ENCODE measurements at regions of chr5 and their contacts with region 1.

Region 1: GRCh38 chr5:67003935-67004729 is 192.5 kb downstream of the CD180 start:
- DNase-seq: peak; percentile 96
- H3K4me3 Mint-ChIP-seq: peak overlapping the region; percentile 94
- H3K27ac Mint-ChIP-seq: peak overlapping the region; percentile 97
- H3K4me1 Mint-ChIP-seq: peaks cover 58% of the 10 kb centered on the region
- H3K27me3 Mint-ChIP-seq: no peaks in the 10 kb centered on the region

Region 2: DNA sequence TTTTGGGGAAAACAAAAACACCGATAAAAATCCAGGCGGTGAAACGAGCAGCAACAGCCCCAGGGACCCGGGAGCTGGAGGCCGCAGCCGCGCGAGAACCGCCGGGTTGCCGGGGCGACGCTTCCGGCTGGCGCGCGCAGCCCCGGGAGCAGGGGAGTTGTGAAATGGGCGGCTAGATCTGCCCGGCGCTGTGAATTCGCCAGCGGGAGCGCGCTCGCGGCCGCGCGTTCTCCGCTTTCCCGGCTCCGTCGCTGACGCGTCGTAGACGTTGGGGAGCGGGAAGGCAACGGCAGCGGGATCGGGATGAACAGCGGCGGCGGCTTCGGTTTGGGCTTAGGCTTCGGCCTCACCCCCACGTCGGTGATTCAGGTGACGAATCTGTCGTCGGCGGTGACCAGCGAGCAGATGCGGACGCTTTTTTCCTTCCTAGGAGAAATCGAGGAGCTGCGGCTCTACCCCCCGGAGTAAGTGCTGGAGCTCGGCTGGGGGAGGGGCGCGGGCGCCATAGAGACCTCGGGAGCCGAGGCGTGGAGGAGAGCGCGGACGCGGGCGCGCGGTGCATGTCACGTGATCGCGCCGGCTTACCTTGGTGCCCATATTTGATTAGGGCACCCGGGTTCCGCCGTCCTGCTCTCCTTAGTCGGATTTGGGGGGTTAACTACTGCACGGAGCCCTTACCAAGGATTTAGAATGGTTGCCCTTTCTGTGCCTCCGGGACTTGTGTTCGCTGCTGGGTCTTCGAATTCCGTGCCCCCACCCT is 859.9 kb before region 1 on chr5 and contains the start of gene SREK1:
- CTCF ChIA-PET with region 1: no interaction called
- intact Hi-C with region 1: loop called (anchors 10 kb)
- DNase-seq: peak; percentile 90
- H3K4me3 Mint-ChIP-seq: peak within 1 kb of the TSS; percentile 92
- H3K27ac Mint-ChIP-seq: peak within 1 kb of the TSS; percentile 98
- H3K4me1 Mint-ChIP-seq: peaks cover 53% of the 10 kb centered on the region
- H3K27me3 Mint-ChIP-seq: no peaks in the 10 kb centered on the region
- total RNA-seq, gene SREK1: 52.2 to 60.0 TPM

Region 3: GRCh38 chr5:66840511-66841013 is 163.6 kb before region 1 on chr5:
- CTCF ChIA-PET with region 1: no interaction called
- intact Hi-C with region 1: loop called (anchors 1 kb)
- DNase-seq: peak; percentile 63
- H3K4me3 Mint-ChIP-seq: peak overlapping the region; percentile 10
- H3K27ac Mint-ChIP-seq: peak overlapping the region; percentile 83
- H3K4me1 Mint-ChIP-seq: peaks cover 27% of the 10 kb centered on the region
- H3K27me3 Mint-ChIP-seq: peaks cover 28% of the 10 kb centered on the region

Region 4: DNA sequence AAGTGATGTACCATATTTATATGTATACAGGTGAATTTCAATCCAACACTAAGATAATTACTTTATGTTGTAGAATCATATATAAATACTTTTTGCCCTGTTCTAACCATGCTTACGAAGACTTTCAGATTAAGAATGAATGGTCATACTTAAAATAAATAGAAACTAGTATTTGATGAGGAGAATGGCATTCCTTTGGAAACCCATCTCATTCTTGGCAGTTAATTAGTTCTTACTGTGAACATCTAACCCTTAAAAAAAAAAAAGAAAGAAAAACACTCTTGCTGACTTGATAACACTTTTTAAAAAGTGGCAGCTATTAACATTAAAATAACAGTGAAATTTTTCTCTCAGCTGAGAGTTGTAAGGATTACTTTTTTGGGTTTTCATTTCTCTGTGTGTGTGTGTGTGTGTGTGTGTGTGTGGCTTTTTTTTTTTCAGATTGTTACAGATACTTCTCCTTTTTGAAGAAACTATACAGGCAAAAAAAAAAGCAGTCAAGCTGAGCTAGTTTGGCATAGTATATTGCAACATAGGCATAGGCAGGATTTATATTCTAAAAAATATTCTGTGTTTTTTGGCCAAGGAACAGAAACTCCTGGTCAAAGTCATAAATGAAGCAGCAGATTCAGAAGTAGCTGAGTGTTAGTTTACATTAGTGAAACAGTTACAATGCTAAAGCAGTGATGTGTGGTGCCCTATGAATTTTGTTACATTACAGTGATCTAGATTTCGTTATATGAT is 29.0 kb after region 1 on chr5:
- CTCF ChIA-PET with region 1: no interaction called
- intact Hi-C with region 1: loop called (anchors 1 kb)
- DNase-seq: no peak
- H3K4me3 Mint-ChIP-seq: no peak overlapping the region
- H3K27ac Mint-ChIP-seq: no peak overlapping the region
- H3K4me1 Mint-ChIP-seq: peaks cover 73% of the 10 kb centered on the region
- H3K27me3 Mint-ChIP-seq: no peaks in the 10 kb centered on the region

Region 5: DNA sequence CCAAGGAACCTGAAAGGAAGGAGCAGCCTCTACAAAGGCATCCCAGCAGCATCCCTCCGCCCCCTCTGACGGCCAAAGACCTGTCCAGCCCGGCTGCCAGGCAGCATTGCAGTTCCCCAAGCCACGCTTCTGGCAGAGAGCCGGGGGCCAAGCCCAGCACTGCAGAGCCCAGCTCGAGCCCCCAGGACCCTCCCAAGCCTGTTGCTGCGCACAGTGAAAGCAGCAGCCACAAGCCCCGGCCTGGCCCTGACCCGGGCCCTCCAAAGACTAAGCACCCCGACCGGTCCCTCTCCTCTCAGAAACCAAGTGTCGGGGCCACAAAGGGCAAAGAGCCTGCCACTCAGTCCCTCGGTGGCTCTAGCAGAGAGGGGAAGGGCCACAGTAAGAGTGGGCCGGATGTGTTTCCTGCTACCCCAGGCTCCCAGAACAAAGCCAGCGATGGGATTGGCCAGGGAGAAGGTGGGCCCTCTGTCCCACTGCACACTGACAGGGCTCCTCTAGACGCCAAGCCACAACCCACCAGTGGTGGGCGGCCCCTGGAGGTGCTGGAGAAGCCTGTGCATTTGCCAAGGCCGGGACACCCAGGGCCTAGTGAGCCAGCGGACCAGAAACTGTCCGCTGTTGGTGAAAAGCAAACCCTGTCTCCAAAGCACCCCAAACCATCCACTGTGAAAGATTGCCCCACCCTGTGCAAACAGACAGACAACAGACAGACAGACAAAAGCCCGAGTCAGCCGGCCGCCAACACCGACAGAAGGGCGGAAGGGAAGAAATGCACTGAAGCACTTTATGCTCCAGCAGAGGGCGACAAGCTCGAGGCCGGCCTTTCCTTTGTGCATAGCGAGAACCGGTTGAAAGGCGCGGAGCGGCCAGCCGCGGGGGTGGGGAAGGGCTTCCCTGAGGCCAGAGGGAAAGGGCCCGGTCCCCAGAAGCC is 161.7 kb after region 1 on chr5:
- CTCF ChIA-PET with region 1: no interaction called
- intact Hi-C with region 1: loop called (anchors 1 kb)
- DNase-seq: peak; percentile 91
- H3K4me3 Mint-ChIP-seq: peak overlapping the region; percentile 76
- H3K27ac Mint-ChIP-seq: peak overlapping the region; percentile 88
- H3K4me1 Mint-ChIP-seq: peaks cover 57% of the 10 kb centered on the region
- H3K27me3 Mint-ChIP-seq: no peaks in the 10 kb centered on the region

Measured in activated naive CD4-positive, alpha-beta T cell treated with anti-CD3 and anti-CD28 coated beads for 36 hours (primary cell).